ENCODE measurements at regions of chr6 and their contacts with region 1.

Region 1: GRCh38 chr6:113414511-113414910 is 442.6 kb upstream of the MARCKS start:
- DNase-seq: peak; percentile 79
- H3K4me3 Mint-ChIP-seq: no peak overlapping the region
- H3K27ac Mint-ChIP-seq: no peak overlapping the region
- H3K4me1 Mint-ChIP-seq: peaks cover 22% of the 10 kb centered on the region
- H3K27me3 Mint-ChIP-seq: no peaks in the 10 kb centered on the region
- CTCF ChIP-seq: peak; percentile 53

Region 2: GRCh38 chr6:112879920-112880413 is 534.5 kb before region 1 on chr6:
- CTCF ChIA-PET with region 1: no interaction called
- POLR2A ChIA-PET with region 1: no interaction called
- intact Hi-C with region 1: loop called (anchors 5 kb)
- DNase-seq: no peak
- H3K4me3 Mint-ChIP-seq: no peak overlapping the region
- H3K27ac Mint-ChIP-seq: no peak overlapping the region
- H3K4me1 Mint-ChIP-seq: peaks cover 6% of the 10 kb centered on the region
- H3K27me3 Mint-ChIP-seq: no peaks in the 10 kb centered on the region
- CTCF ChIP-seq: no peak

Region 3: GRCh38 chr6:113057567-113058053 is 356.9 kb before region 1 on chr6:
- CTCF ChIA-PET with region 1: no interaction called
- POLR2A ChIA-PET with region 1: no interaction called
- intact Hi-C with region 1: no loop called
- DNase-seq: no peak
- H3K4me3 Mint-ChIP-seq: no peak overlapping the region
- H3K27ac Mint-ChIP-seq: no peak overlapping the region
- H3K4me1 Mint-ChIP-seq: no peaks in the 10 kb centered on the region
- H3K27me3 Mint-ChIP-seq: no peaks in the 10 kb centered on the region
- CTCF ChIP-seq: no peak

Region 4: DNA sequence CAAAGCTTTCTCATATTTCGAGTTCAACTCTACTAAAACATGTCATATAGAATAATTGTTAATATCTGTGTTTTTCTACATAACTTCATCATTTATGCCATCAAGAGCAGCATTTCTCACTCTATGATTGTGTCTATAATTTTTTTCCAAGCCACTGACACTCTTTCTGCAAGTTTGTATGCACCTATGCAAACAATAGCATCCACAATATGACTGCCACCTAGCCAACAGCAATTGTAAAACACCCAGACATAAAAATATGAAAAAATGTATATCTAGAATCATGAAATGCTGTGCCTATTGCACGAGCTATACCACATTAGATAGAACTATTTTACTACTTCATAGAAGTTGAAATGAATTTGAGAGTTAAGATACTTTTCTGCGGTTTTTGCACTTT is 156.1 kb after region 1 on chr6:
- CTCF ChIA-PET with region 1: no interaction called
- POLR2A ChIA-PET with region 1: no interaction called
- intact Hi-C with region 1: loop called (anchors 5 kb)
- DNase-seq: no peak
- H3K4me3 Mint-ChIP-seq: no peak overlapping the region
- H3K27ac Mint-ChIP-seq: no peak overlapping the region
- H3K4me1 Mint-ChIP-seq: no peaks in the 10 kb centered on the region
- H3K27me3 Mint-ChIP-seq: no peaks in the 10 kb centered on the region
- CTCF ChIP-seq: peak; percentile 21

Measured in MCF 10A (cell line).